ENCODE measurements at regions of chr12 and their contacts with region 1.

Region 1: GRCh38 chr12:50504798-50505385 is at the start of gene DIP2B:
- DNase-seq: peak; percentile 93 to 97 (median 96)
- ATAC-seq: peak; percentile 92 to 94 (median 93)
- H3K4me3 ChIP-seq: peak within 1 kb of the TSS; percentile 73 to 86 (median 75)
- H3K27ac ChIP-seq: peak within 1 kb of the TSS; percentile 90 to 97 (median 94)
- H3K4me1 ChIP-seq: peaks cover 4 to 34% (median 9%) of the 10 kb centered on the region in 3 donors
- H3K27me3 ChIP-seq: no peaks in the 10 kb centered on the region
- CTCF ChIP-seq: peak; percentile 77 to 94 (median 84)
- total RNA-seq, gene DIP2B: 8.0 to 15.9 (median 9.4) TPM

Region 2: DNA sequence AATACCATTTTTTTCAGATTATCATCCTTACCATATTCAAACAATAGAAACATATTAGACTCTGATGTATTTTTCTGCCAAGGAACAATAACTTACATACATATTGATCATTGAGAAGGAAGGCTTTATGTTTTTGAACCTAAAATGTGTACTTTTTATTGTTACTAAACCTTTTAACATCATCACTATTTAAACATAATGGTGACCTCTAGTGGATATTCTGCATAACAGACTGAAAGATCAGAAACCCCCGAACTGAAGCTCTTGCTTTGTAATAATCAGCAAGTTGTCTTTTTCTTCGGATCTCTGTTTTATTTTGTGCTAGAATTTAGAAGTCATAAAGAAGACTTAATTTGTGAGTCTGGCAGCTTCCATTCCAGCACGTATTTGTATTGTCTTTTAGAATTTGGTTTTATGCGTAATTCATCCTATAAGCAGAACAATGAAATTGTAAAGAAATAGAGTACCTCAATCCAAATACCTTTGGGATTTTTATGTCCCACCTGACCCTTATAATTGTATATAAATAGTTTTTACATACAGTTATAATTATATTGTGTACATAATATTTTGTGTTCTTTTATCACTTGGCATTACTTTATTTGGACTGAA is 133.1 kb after region 1 on chr12:
- intact Hi-C with region 1: loop called in 2 of 3 experiments (anchors 5 kb)
- DNase-seq: no peak
- ATAC-seq: peak in 3 of 4 donors; percentile 60 to 71 (median 71)
- H3K4me3 ChIP-seq: no peak overlapping the region
- H3K27ac ChIP-seq: no peak overlapping the region
- H3K4me1 ChIP-seq: peaks cover 6 to 22% (median 16%) of the 10 kb centered on the region in 3 donors
- H3K27me3 ChIP-seq: no peaks in the 10 kb centered on the region
- CTCF ChIP-seq: peak; percentile 18 to 58 (median 35)